ENCODE measurements at regions of chr1 and their contacts with region 1.

Region 1: GRCh38 chr1:155859234-155859829 is at the start of gene SYT11:
- DNase-seq: peak; percentile 98
- H3K4me3 Mint-ChIP-seq: peak within 1 kb of the TSS; percentile 100
- H3K27ac Mint-ChIP-seq: peak within 1 kb of the TSS; percentile 83
- H3K4me1 Mint-ChIP-seq: peaks cover 53% of the 10 kb centered on the region
- H3K27me3 Mint-ChIP-seq: peaks cover 24% of the 10 kb centered on the region
- total RNA-seq, gene SYT11: 6.3 to 7.0 TPM

Region 2: DNA sequence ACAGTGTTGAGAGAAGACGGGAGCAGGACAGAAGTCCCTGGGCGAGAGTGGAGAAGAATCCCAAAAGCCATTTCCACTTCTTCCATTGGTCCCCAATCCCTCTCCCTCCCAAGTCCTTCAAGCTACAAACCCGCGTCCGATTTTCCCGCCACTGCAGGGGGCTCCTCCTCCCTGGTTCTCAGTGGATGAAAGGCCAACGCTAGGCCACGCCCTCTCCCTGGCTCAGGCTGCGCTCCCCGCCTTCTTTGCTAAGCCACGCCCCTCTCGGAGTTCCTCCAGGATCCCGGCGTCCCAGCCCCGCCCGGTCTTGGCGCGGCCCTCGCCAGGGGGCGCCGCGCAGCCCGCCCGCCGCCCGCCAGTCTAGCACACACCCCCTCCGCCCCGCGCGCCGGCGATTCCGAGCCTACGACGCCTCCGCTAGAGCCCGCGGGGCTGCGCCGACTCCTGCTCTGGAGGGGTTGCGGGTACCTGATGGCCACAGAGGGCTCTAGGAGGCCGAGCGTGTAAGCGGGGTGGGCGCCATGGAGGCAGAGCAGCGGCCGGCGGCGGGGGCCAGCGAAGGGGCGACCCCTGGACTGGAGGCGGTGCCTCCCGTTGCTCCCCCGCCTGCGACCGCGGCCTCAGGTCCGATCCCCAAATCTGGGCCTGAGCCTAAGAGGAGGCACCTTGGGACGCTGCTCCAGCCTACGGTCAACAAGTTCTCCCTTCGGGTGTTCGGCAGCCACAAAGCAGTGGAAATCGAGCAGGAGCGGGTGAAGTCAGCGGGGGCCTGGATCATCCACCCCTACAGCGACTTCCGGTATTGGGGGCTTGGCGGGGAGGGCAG is 582.0 kb before region 1 on chr1 and contains the start of gene HCN3:
- CTCF ChIA-PET with region 1: no interaction called
- intact Hi-C with region 1: loop called (anchors 1 kb)
- DNase-seq: peak; percentile 96
- H3K4me3 Mint-ChIP-seq: peak within 1 kb of the TSS; percentile 62
- H3K27ac Mint-ChIP-seq: no peak within 1 kb of the TSS
- H3K4me1 Mint-ChIP-seq: peaks cover 30% of the 10 kb centered on the region
- H3K27me3 Mint-ChIP-seq: no peaks in the 10 kb centered on the region
- total RNA-seq, gene HCN3: 0.79 to 1.6 TPM

Region 3: GRCh38 chr1:155744711-155745283 is 114.5 kb before region 1 on chr1:
- CTCF ChIA-PET with region 1: no interaction called
- intact Hi-C with region 1: loop called (anchors 2 kb)
- DNase-seq: no peak
- H3K4me3 Mint-ChIP-seq: peak overlapping the region; percentile 87
- H3K27ac Mint-ChIP-seq: peak overlapping the region; percentile 84
- H3K4me1 Mint-ChIP-seq: peaks cover 6% of the 10 kb centered on the region
- H3K27me3 Mint-ChIP-seq: no peaks in the 10 kb centered on the region

Region 4: GRCh38 chr1:155893389-155894142 is 34.2 kb after region 1 on chr1:
- CTCF ChIA-PET with region 1: interaction called, 3 read pairs
- intact Hi-C with region 1: loop called (anchors 1 kb)
- DNase-seq: peak; percentile 54
- H3K4me3 Mint-ChIP-seq: no peak overlapping the region
- H3K27ac Mint-ChIP-seq: peak overlapping the region; percentile 71
- H3K4me1 Mint-ChIP-seq: peaks cover 15% of the 10 kb centered on the region
- H3K27me3 Mint-ChIP-seq: no peaks in the 10 kb centered on the region

Region 5: GRCh38 chr1:155978325-155978972 is 119.1 kb after region 1 on chr1 and contains the start of gene ARHGEF2:
- CTCF ChIA-PET with region 1: no interaction called
- intact Hi-C with region 1: loop called (anchors 2 kb)
- DNase-seq: peak; percentile 87
- H3K4me3 Mint-ChIP-seq: peak within 1 kb of the TSS; percentile 98
- H3K27ac Mint-ChIP-seq: peak within 1 kb of the TSS; percentile 99
- H3K4me1 Mint-ChIP-seq: peaks cover 64% of the 10 kb centered on the region
- H3K27me3 Mint-ChIP-seq: no peaks in the 10 kb centered on the region
- total RNA-seq, gene ARHGEF2: 154 to 159 TPM

Measured in activated naive CD4-positive, alpha-beta T cell treated with anti-CD3 and anti-CD28 coated beads for 36 hours (primary cell).